Endothelial cell of umbilical vein (primary cell): ENCODE measurements at regions of chr5 and their contacts with region 1.

Region 1: GRCh38 chr5:180540050-180540694 is 46.0 kb downstream of the CNOT6 start:
- DNase-seq: no peak
- H3K4me3 ChIP-seq: no peak overlapping the region
- H3K27ac ChIP-seq: no peak overlapping the region
- H3K4me1 ChIP-seq: peaks cover 4% of the 10 kb centered on the region
- H3K27me3 ChIP-seq: no peaks in the 10 kb centered on the region
- CTCF ChIP-seq: no peak
- POLR2A ChIP-seq: no peak

Region 2: DNA sequence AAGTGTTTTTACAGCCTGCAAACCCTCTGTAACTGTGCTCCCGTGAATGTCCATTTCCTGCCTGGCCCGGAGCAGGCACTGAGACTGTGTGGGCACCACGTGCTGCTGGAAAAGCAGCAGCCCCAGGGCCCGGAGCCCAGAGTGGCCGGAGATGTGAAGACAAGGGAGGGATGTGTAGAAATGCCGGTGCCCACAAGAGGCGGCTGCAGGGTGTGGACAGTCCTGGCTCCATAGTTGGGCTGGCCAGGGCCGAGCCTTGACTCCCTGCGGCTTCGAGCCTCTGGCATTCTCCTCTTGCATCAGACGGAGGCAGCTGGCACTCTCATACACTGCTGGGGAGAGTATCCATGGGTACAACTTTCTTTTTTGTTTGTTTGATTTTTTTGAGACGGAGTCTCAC is 173.8 kb before region 1 on chr5:
- CTCF ChIA-PET with region 1: no interaction called
- POLR2A ChIA-PET with region 1: no interaction called
- dilution Hi-C with region 1: no loop called
- intact Hi-C with region 1: no loop called
- DNase-seq: peak; percentile 7
- H3K4me3 ChIP-seq: no peak overlapping the region
- H3K27ac ChIP-seq: no peak overlapping the region
- H3K4me1 ChIP-seq: no peaks in the 10 kb centered on the region
- H3K27me3 ChIP-seq: no peaks in the 10 kb centered on the region
- CTCF ChIP-seq: no peak
- POLR2A ChIP-seq: no peak

Region 3: GRCh38 chr5:180558232-180558631 is 18.1 kb after region 1 on chr5:
- CTCF ChIA-PET with region 1: interaction called, 3 read pairs
- POLR2A ChIA-PET with region 1: interaction called, 11 read pairs
- dilution Hi-C with region 1: no loop called
- intact Hi-C with region 1: no loop called
- DNase-seq: no peak
- H3K4me3 ChIP-seq: no peak overlapping the region
- H3K27ac ChIP-seq: no peak overlapping the region
- H3K4me1 ChIP-seq: no peaks in the 10 kb centered on the region
- H3K27me3 ChIP-seq: no peaks in the 10 kb centered on the region
- CTCF ChIP-seq: no peak
- POLR2A ChIP-seq: no peak

Region 4: GRCh38 chr5:180575571-180575970 is 35.4 kb after region 1 on chr5:
- CTCF ChIA-PET with region 1: no interaction called
- POLR2A ChIA-PET with region 1: no interaction called
- dilution Hi-C with region 1: no loop called
- intact Hi-C with region 1: no loop called
- DNase-seq: no peak
- H3K4me3 ChIP-seq: no peak overlapping the region
- H3K27ac ChIP-seq: no peak overlapping the region
- H3K4me1 ChIP-seq: no peaks in the 10 kb centered on the region
- H3K27me3 ChIP-seq: no peaks in the 10 kb centered on the region
- CTCF ChIP-seq: no peak
- POLR2A ChIP-seq: no peak

Region 5: GRCh38 chr5:180658774-180659564 is 118.8 kb after region 1 on chr5:
- CTCF ChIA-PET with region 1: no interaction called
- POLR2A ChIA-PET with region 1: interaction called, 13 read pairs
- dilution Hi-C with region 1: no loop called
- intact Hi-C with region 1: no loop called
- DNase-seq: no peak
- H3K4me3 ChIP-seq: no peak overlapping the region
- H3K27ac ChIP-seq: no peak overlapping the region
- H3K4me1 ChIP-seq: no peaks in the 10 kb centered on the region
- H3K27me3 ChIP-seq: peaks cover 2 to 7% of the 10 kb centered on the region in 2 experiments
- CTCF ChIP-seq: no peak
- POLR2A ChIP-seq: no peak